MCF 10A (cell line): ENCODE measurements at regions of chr2 and their contacts with region 1.

Region 1: DNA sequence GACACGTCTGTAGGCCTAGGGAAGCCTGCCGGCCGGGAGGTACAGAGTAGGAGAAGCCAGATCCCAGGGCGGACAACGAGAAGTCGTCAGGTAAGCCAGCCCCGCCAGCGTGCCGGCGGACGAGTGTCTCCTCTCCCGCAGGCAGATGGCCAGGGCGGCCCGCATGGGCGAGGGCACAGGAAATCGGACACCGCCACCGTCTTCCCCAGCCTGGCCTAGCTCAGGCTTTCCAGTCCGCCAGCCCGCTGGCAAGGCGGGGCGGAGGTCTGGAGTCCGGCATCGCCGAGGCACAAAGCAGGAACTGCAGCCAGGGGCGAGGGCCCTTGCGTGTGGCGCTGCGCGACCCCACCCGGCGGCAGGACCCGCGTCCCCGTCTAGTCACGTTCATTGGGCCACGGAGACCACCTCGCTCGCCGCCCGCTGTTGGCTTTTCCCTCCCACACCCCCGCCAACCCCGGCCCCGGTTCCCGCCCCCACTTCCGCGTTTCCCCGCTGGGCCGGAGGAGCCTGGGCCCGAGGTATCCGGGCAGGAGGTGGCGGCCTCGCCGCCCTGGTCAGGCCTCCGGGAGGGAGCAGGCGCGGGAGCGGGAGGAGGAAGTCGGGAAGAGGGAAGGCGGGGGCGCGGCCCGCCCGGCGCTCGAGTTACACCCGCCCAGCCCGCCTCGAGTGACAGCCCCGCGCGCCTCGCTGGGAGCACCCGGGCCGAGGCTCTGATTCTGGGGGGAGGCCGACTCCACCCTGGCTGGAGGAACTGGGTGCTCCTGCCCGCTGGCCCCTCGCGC is at the start of gene GPD2:
- DNase-seq: peak; percentile 93
- H3K4me3 Mint-ChIP-seq: peak within 1 kb of the TSS; percentile 88
- H3K27ac Mint-ChIP-seq: peak within 1 kb of the TSS; percentile 77
- H3K4me1 Mint-ChIP-seq: peaks cover 29% of the 10 kb centered on the region
- H3K27me3 Mint-ChIP-seq: no peaks in the 10 kb centered on the region
- CTCF ChIP-seq: no peak
- total RNA-seq, gene GPD2: 37.4 and 62.5 TPM in 2 replicates

Region 2: GRCh38 chr2:156341452-156342253 is 94.3 kb before region 1 on chr2:
- CTCF ChIA-PET with region 1: interaction called, 5 read pairs
- POLR2A ChIA-PET with region 1: interaction called, 90 read pairs
- intact Hi-C with region 1: loop called (anchors 2 kb)
- DNase-seq: peak; percentile 98
- H3K4me3 Mint-ChIP-seq: peak overlapping the region; percentile 91
- H3K27ac Mint-ChIP-seq: peak overlapping the region; percentile 98
- H3K4me1 Mint-ChIP-seq: peaks cover 16% of the 10 kb centered on the region
- H3K27me3 Mint-ChIP-seq: no peaks in the 10 kb centered on the region
- CTCF ChIP-seq: no peak

Region 3: GRCh38 chr2:156400706-156401678 is 34.9 kb before region 1 on chr2:
- CTCF ChIA-PET with region 1: interaction called, 5 read pairs
- POLR2A ChIA-PET with region 1: interaction called, 52 read pairs
- intact Hi-C with region 1: loop called (anchors 1 kb)
- DNase-seq: peak; percentile 78
- H3K4me3 Mint-ChIP-seq: peak overlapping the region; percentile 78
- H3K27ac Mint-ChIP-seq: peak overlapping the region; percentile 96
- H3K4me1 Mint-ChIP-seq: peaks cover 26% of the 10 kb centered on the region
- H3K27me3 Mint-ChIP-seq: no peaks in the 10 kb centered on the region
- CTCF ChIP-seq: no peak

Region 4: DNA sequence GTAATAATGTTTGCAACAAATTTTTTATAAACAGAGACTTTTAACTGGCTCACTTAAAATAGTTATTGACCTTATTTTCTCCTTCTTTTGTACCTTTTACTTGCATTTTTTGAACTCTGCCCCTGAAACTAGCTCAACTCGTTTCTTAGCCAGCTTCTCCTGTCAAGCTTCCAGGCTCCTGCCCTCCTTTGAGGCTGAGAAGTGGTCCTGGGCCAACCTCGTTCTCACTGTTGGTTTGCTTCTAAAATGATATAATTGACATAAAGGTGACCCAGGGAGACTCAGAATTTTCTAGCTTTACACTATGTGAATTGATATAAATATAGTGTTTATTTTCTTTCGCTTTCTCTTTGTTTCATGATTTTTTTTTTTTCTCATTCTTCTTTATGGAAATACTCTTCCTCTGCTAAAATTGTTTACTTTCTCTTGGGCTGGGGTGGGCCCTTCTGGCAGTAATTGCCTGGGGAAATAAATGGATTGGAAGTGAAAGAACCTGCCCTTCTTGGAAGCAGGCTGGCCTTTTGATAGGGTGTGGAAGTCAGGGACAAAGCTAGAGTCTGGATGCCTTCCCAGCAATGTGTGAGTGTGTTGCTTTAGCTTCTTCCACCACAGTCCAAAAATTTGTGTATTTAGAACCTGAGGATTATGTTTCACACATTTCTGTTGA is 31.0 kb after region 1 on chr2:
- CTCF ChIA-PET with region 1: interaction called, 3 read pairs
- POLR2A ChIA-PET with region 1: interaction called, 29 read pairs
- intact Hi-C with region 1: no loop called
- DNase-seq: no peak
- H3K4me3 Mint-ChIP-seq: peak overlapping the region; percentile 60
- H3K27ac Mint-ChIP-seq: peak overlapping the region; percentile 93
- H3K4me1 Mint-ChIP-seq: peaks cover 32% of the 10 kb centered on the region
- H3K27me3 Mint-ChIP-seq: no peaks in the 10 kb centered on the region
- CTCF ChIP-seq: no peak

Region 5: GRCh38 chr2:156476850-156477206 is 40.9 kb after region 1 on chr2:
- CTCF ChIA-PET with region 1: interaction called, 3 read pairs
- POLR2A ChIA-PET with region 1: interaction called, 27 read pairs
- intact Hi-C with region 1: loop called (anchors 2 kb)
- DNase-seq: peak; percentile 61
- H3K4me3 Mint-ChIP-seq: peak overlapping the region; percentile 65
- H3K27ac Mint-ChIP-seq: peak overlapping the region; percentile 93
- H3K4me1 Mint-ChIP-seq: peaks cover 29% of the 10 kb centered on the region
- H3K27me3 Mint-ChIP-seq: no peaks in the 10 kb centered on the region
- CTCF ChIP-seq: no peak

Region 6: DNA sequence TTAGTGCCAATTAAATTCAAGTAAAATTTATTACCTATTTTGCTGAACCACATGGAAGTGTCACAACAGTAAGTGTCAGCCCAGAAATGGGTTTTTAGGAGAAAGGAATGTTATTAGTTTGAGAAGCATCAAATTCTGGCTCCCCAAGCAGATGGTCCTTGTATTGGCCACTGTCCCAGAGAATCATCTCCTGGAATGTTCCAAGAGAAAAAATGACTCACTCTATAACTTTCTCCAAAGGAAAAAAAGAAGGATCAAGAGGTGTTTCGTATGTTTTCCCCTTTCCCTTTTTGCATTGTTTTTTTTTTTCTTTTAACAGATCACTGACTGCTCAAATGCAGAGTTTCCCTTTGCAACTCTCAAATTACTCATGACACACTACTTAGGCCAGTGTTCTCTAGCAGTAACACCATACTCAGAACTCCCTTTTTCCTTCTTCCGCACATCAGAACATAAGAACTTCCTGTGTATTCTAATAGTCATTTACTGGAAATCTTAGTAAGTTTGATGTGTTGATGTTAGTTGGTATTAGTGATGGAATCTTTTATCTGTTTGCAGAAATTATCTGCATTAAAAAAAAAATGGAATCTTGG is 390.5 kb after region 1 on chr2:
- CTCF ChIA-PET with region 1: no interaction called
- POLR2A ChIA-PET with region 1: no interaction called
- intact Hi-C with region 1: loop called (anchors 5 kb)
- DNase-seq: peak; percentile 64
- H3K4me3 Mint-ChIP-seq: no peak overlapping the region
- H3K27ac Mint-ChIP-seq: peak overlapping the region; percentile 42
- H3K4me1 Mint-ChIP-seq: peaks cover 9% of the 10 kb centered on the region
- H3K27me3 Mint-ChIP-seq: no peaks in the 10 kb centered on the region
- CTCF ChIP-seq: no peak

Region 7: DNA sequence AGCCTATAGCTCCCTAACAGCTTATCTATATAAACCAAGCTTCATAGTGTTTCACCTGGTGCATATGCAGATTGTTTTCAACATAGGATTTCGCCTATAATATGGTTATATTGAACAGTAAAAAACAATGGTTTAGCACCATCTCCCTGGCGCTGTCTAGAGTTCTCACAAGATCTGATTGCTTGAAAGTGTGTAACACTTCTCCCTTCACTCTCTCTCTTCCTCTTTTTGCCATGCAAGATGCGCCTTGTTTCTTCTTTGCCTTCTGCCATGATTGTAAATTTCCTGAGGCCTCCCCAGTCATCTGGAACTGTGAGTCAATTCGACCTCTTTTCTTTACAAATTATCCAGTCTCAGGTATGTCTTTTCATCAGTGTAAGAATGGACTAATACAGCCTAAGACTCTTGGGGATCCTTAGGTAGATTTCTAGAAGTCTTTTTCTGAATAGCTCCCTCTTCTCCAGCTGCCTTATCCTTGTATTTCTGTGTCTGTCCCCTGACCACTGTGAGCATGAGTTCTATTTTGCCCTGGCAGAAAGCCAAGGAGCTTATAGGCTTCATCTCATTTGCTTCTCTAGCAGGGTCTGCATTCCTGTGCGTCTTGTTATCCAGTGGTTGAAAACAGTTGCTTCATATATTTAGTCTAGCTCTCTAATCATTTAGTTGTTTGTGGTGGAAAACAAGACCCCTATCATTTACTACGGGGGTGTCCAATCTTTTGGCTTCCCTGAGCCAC is 401.9 kb after region 1 on chr2:
- CTCF ChIA-PET with region 1: no interaction called
- POLR2A ChIA-PET with region 1: no interaction called
- intact Hi-C with region 1: no loop called
- DNase-seq: no peak
- H3K4me3 Mint-ChIP-seq: no peak overlapping the region
- H3K27ac Mint-ChIP-seq: no peak overlapping the region
- H3K4me1 Mint-ChIP-seq: no peaks in the 10 kb centered on the region
- H3K27me3 Mint-ChIP-seq: no peaks in the 10 kb centered on the region
- CTCF ChIP-seq: no peak